Endothelial cell of umbilical vein (primary cell): ENCODE measurements at regions of chr7 and their contacts with region 1.

Region 1: DNA sequence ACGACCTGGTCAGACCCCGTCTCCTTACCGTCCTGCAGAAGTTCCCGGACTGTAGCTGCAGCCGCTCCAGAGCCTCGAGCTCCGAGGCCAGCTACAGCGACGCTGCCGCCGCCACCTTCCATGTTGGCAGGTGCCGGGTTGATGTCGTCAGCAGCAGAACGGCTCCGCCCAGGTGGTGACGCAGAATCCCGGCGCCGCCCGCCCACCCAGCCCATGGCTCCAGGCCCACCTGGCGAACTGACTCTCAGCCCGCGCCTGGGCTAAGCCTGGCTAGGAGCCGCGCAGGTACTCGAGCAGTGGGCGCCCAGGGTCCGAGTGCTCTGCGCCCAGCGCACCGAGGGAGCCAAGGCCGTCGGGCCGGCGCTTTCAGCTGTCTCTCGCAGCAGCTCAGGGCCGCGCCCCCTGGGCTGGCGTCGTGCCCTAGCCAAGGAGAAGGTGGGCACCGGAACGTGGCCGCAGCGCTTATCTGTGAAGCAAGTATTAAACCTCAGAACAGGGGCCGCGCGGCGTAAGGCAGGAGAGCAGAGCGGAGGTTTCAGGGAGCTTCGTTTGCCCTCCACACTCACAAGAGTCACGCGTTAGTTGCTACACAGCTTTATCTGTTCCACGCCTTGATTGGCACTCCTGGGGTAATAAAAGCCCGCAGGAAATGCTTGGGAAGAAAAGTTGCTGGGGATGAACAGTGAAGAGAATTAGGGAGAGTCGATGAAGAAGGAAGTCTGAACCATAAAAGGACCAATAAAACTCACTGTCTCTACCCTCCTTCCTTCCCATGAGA is at the starts of genes COG5 and DUS4L:
- DNase-seq: peak; percentile 89
- H3K4me3 ChIP-seq: peak within 1 kb of the TSS; percentile 87 to 99 (median 95)
- H3K27ac ChIP-seq: peak within 1 kb of the TSS; percentile 91
- H3K4me1 ChIP-seq: peaks cover 33% of the 10 kb centered on the region
- H3K27me3 ChIP-seq: no peaks in the 10 kb centered on the region
- CTCF ChIP-seq: no peak
- POLR2A ChIP-seq: peak; percentile 88
- total RNA-seq, gene COG5: 42.4 and 45.3 TPM in 2 replicates
- total RNA-seq, gene DUS4L: 9.6 and 9.8 TPM in 2 replicates

Region 2: GRCh38 chr7:107579885-107580715 is 16.1 kb after region 1 on chr7 and contains the start of gene BCAP29:
- CTCF ChIA-PET with region 1: interaction called, 8 read pairs
- POLR2A ChIA-PET with region 1: interaction called, 3 read pairs
- dilution Hi-C with region 1: no loop called
- intact Hi-C with region 1: loop called (anchors 1 kb)
- DNase-seq: peak; percentile 73
- H3K4me3 ChIP-seq: peak within 1 kb of the TSS; percentile 74 to 99 (median 99)
- H3K27ac ChIP-seq: peak within 1 kb of the TSS; percentile 95
- H3K4me1 ChIP-seq: peaks cover 24% of the 10 kb centered on the region
- H3K27me3 ChIP-seq: no peaks in the 10 kb centered on the region
- CTCF ChIP-seq: no peak
- POLR2A ChIP-seq: peak; percentile 77
- total RNA-seq, gene BCAP29: 162 and 175 TPM in 2 replicates

Region 3: GRCh38 chr7:107754642-107755041 is 190.7 kb after region 1 on chr7:
- CTCF ChIA-PET with region 1: no interaction called
- POLR2A ChIA-PET with region 1: no interaction called
- dilution Hi-C with region 1: no loop called
- intact Hi-C with region 1: no loop called
- DNase-seq: no peak
- H3K4me3 ChIP-seq: no peak overlapping the region
- H3K27ac ChIP-seq: no peak overlapping the region
- H3K4me1 ChIP-seq: no peaks in the 10 kb centered on the region
- H3K27me3 ChIP-seq: no peaks in the 10 kb centered on the region
- CTCF ChIP-seq: no peak
- POLR2A ChIP-seq: no peak

Region 4: GRCh38 chr7:107939573-107940489 is 375.9 kb after region 1 on chr7:
- CTCF ChIA-PET with region 1: no interaction called
- POLR2A ChIA-PET with region 1: no interaction called
- dilution Hi-C with region 1: no loop called
- intact Hi-C with region 1: no loop called
- DNase-seq: peak; percentile 98
- H3K4me3 ChIP-seq: no peak overlapping the region
- H3K27ac ChIP-seq: peak overlapping the region; percentile 91
- H3K4me1 ChIP-seq: peaks cover 62% of the 10 kb centered on the region
- H3K27me3 ChIP-seq: no peaks in the 10 kb centered on the region
- CTCF ChIP-seq: no peak
- POLR2A ChIP-seq: peak; percentile 56